ENCODE measurements at regions of chr7 and their contacts with region 1.

Region 1: DNA sequence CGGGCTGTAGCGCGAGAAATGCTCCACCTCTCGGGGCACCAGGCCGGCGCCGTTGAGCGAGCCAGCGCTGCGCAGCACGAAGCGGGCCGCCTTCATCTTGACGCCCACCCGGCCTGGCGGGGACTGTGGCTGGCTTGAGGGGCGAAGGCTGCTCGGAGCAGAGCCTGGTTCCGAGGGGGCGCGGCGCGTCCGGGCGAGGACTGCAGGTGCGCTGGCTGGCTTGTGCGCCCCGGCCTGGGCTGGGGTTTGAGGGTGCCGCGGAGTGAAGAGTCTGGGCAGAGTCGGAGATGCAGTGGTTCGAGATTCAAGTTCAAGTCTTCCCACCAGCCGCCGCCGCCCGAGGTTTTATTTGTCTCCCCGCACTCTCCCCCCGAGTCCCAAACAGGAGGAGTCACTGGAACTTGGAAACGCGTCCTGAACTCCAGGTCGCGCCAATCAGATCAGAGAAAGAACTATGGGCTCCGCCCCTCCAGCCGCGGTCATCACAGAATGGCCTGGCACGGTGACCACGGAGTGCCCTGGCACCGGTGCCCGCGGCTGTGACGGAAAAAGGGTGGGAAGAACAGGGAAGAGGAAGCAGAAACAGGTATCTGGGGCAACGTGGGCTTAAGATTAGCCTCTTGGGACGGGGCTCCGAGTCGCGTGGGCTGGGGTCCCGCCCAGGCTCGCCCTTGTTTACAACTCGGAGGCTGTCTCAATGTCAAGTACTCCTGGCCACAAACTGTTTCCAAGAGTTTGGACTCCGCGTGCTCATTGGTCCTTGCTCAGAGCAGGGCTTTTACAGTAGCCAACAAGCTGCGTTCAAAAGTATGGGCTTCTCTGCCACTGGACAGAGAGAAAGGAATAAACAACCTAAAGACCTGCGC is at the start of gene PDK4:
- DNase-seq: peak; percentile 91
- H3K4me3 ChIP-seq: peak within 1 kb of the TSS; percentile 52 to 81 (median 60)
- H3K27ac ChIP-seq: peak within 1 kb of the TSS; percentile 69 to 95 (median 92)
- H3K4me1 ChIP-seq: peaks cover 0 to 72% (median 35%) of the 10 kb centered on the region in 6 donors
- H3K27me3 ChIP-seq: peaks cover 0 to 15% (median 0%) of the 10 kb centered on the region in 7 donors
- CTCF ChIP-seq: no peak
- POLR2A ChIP-seq: peak in 2 of 3 donors; percentile 76 to 88
- total RNA-seq, gene PDK4: 42.1 to 1,055 (median 252) TPM

Region 2: DNA sequence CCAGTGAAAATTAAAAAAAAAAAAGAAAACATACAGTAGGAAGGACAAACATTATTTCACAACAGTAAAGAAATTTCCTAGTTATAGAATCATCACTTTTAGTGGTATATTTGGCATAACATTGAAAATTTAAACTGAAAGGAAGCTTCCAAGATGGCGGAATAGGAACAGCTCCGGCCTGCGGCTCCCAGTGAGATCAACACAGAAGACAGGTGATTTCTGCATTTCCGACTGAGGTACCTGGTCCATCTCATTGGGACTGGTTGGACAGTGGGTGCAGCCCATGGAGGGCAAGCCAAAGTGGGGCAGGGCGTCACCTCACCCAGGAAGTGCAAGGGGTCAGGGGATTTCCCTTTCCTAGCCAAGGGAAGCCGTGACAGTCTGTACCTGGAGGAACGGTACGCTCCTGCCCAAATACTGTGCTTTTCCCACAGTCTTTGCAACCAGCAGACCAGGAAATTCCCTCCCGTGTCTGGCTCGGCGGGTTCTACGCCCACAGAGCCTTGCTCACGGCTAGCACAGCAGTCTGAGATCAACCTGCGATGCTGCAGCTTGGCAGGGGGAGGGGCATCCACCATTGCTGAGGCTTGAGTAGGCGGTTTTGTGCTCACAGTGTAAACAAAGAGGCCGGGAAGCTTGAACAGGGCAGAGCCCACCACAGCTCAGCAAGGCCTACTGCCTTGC is 219.7 kb before region 1 on chr7:
- intact Hi-C with region 1: no loop called
- DNase-seq: no peak
- H3K4me3 ChIP-seq: no peak overlapping the region
- H3K27ac ChIP-seq: no peak overlapping the region
- H3K4me1 ChIP-seq: no peaks in the 10 kb centered on the region
- H3K27me3 ChIP-seq: peaks cover 0 to 7% (median 0%) of the 10 kb centered on the region in 7 donors
- CTCF ChIP-seq: no peak
- POLR2A ChIP-seq: no peak

Region 3: DNA sequence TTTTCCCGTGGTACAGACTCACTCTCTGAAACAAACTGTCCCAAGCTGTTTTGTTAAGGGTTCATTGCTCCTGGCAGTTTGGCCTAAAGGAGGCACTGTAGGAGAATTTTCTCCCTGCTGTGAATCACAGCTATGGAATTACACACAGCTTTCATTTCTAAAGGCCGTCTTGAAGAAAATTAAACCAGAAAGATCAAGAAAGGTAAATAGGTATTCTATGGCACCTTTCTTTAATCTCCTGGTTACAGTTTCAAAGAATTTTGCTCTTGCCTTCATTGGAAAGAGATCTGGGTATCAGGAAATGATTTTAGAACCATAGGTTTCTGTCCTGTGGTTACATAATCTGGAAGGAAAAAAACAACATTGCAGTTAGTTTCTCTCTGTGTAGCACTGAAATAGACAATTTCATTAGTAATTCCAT is 51.3 kb before region 1 on chr7:
- intact Hi-C with region 1: loop called (anchors 10 kb)
- DNase-seq: no peak
- H3K4me3 ChIP-seq: peak overlapping the region in 5 of 8 donors; percentile 3 to 55 (median 15)
- H3K27ac ChIP-seq: peak overlapping the region in 7 of 8 donors; percentile 24 to 77 (median 71)
- H3K4me1 ChIP-seq: peaks cover 0 to 28% (median 19%) of the 10 kb centered on the region in 6 donors
- H3K27me3 ChIP-seq: no peaks in the 10 kb centered on the region
- CTCF ChIP-seq: peak; percentile 16 to 77 (median 60)
- POLR2A ChIP-seq: no peak

Region 4: DNA sequence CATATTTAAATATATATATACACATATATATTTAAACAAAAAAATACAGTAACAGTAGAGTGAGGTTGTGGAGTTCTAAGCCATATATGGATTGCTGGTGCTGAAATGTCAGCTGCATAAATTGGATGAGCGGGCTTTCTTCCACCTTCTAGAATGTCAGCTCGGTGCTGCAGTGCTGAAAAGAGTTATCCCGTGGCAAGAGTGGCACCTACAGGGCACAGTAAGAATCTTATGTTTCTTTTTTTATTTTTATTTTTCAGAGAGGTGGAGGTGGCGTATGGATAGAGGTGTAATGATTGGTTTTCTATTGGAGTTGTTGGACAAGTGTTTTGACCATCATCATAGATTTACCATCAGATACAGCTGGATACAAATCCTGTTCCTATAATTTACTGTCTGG is 89.7 kb after region 1 on chr7:
- intact Hi-C with region 1: loop called (anchors 10 kb)
- DNase-seq: no peak
- H3K4me3 ChIP-seq: no peak overlapping the region
- H3K27ac ChIP-seq: no peak overlapping the region
- H3K4me1 ChIP-seq: peaks cover 5 to 27% (median 9%) of the 10 kb centered on the region in 6 donors
- H3K27me3 ChIP-seq: no peaks in the 10 kb centered on the region
- CTCF ChIP-seq: peak in 9 of 11 experiments; percentile 26 to 76 (median 46)
- POLR2A ChIP-seq: no peak